RWPE1 (cell line): ENCODE measurements at regions of chr6 and their contacts with region 1.

Region 1: GRCh38 chr6:54525731-54526130 is 217.5 kb downstream of the TINAG start:
- DNase-seq: no peak
- H3K27ac ChIP-seq: no peak overlapping the region
- CTCF ChIP-seq: no peak

Region 2: DNA sequence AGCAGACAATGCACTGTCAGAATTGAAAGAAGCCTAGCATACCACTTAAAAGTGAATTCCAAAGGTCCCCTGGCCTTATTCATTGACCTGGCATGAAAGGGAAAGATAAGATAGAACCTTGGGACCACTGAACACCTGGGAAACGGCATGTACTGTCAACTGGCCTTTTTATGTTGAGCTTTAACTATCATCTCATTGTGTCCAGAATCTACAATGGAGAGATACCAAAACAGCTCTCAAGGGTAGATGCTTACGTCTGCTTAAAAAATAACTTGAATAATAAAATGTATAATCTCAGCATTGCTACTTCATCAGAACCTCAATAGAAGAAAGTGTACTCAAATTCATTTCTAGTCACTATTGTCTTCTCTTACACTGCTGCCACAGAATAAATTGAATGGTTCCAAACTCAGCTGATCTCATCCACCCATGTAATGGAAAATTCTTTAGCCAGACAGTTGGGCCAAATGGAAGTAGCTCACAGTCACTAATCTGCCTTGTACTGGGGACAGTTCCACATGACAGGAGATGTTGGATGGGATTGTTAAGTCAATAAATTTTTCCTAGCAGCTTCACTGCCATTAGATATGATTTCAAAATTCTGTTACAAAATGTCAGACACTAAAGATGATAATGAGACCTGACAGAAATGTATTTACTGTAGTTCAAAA is 320.7 kb before region 1 on chr6:
- CTCF ChIA-PET with region 1: interaction called, 12 read pairs
- POLR2A ChIA-PET with region 1: no interaction called
- DNase-seq: no peak
- H3K27ac ChIP-seq: no peak overlapping the region
- CTCF ChIP-seq: no peak

Region 3: DNA sequence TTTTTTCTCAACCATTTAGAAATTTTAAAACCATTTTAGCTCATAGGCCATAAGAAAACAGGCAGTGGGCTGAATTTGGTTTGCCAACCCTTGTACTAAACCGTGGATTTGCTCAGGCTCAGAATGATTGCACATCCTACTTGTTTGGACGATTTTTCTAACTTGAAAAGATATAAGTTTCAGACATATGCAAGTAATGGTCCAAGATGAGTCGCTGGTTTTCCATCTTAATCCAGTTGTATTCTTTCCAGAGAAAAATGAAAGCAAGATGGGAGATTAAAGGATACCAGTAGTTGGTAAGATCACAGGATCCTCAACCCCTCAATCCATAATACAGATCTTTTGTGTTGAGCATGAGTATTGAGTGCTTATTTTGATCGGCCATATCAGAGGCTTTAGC is 33.4 kb after region 1 on chr6:
- CTCF ChIA-PET with region 1: no interaction called
- POLR2A ChIA-PET with region 1: no interaction called
- DNase-seq: no peak
- H3K27ac ChIP-seq: no peak overlapping the region
- CTCF ChIP-seq: no peak